CD4-positive, alpha-beta memory T cell (primary cell): ENCODE measurements at regions of chr17 and their contacts with region 1.

Region 1: DNA sequence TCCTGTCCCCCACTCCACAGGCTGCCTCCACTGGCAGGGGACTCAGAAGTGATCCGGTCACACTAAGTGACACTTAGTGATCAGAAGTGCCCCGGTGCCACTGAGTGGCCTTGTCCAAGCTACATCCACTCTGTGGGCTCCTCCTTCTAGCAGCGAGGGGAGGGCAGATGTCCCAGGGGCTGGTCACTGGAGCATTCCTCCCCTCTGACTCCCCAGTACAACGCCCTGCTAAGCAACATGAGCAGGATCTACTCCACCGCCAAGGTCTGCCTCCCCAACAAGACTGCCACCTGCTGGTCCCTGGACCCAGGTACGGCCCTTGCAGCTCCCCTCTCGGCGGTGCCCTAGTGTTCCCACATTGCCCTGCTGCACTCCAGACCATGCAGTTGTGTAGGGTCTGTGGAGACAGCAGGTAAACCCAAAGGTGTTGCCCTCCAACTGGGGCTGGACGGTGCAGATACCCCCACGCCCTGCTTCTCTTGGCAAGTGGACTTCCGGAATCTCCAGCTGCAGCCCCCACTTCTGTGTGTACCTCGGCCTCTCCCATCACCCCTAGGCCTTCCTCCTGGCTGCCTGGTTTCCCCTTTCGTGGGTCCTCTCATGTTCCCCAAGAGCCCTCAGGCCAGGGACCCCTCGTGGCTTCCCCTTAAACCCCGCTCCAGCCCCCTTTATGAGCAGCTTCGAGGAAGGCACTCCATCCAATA is 2.1 kb downstream of the ACE start:
- DNase-seq: peak; percentile 76 to 83 (median 77)
- H3K4me3 ChIP-seq: no peak overlapping the region
- H3K4me3 Mint-ChIP-seq: peak overlapping the region; percentile 49 to 86 (median 70)
- H3K27ac ChIP-seq: no peak overlapping the region
- H3K27ac Mint-ChIP-seq: peak overlapping the region in 5 of 7 donors; percentile 32 to 75 (median 57)
- H3K4me1 ChIP-seq: peaks cover 27% of the 10 kb centered on the region
- H3K4me1 Mint-ChIP-seq: peaks cover 8 to 34% (median 16%) of the 10 kb centered on the region in 4 donors
- H3K27me3 ChIP-seq: peaks cover 8% of the 10 kb centered on the region
- H3K27me3 Mint-ChIP-seq: no peaks in the 10 kb centered on the region

Region 2: GRCh38 chr17:63419949-63420867 is 58.7 kb before region 1 on chr17:
- CTCF ChIA-PET with region 1: interaction called, 339 read pairs
- POLR2A ChIA-PET with region 1: interaction called, 125 read pairs
- intact Hi-C with region 1: loop called (anchors 1 kb)
- DNase-seq: peak; percentile 32 to 55 (median 42)
- H3K4me3 ChIP-seq: no peak overlapping the region
- H3K4me3 Mint-ChIP-seq: peak overlapping the region; percentile 41 to 68 (median 61)
- H3K27ac ChIP-seq: no peak overlapping the region
- H3K27ac Mint-ChIP-seq: peak overlapping the region; percentile 47 to 93 (median 85)
- H3K4me1 ChIP-seq: peaks cover 17% of the 10 kb centered on the region
- H3K4me1 Mint-ChIP-seq: peaks cover 7 to 22% (median 14%) of the 10 kb centered on the region in 4 donors
- H3K27me3 ChIP-seq: no peaks in the 10 kb centered on the region
- H3K27me3 Mint-ChIP-seq: no peaks in the 10 kb centered on the region

Region 3: GRCh38 chr17:63425482-63425881 is 53.5 kb before region 1 on chr17:
- CTCF ChIA-PET with region 1: interaction called, 339 read pairs
- POLR2A ChIA-PET with region 1: interaction called, 125 read pairs
- intact Hi-C with region 1: loop called (anchors 1 kb)
- DNase-seq: peak; percentile 68 to 74 (median 72)
- H3K4me3 ChIP-seq: no peak overlapping the region
- H3K4me3 Mint-ChIP-seq: peak overlapping the region; percentile 32 to 82 (median 48)
- H3K27ac ChIP-seq: no peak overlapping the region
- H3K27ac Mint-ChIP-seq: peak overlapping the region in 5 of 7 donors; percentile 47 to 87 (median 67)
- H3K4me1 ChIP-seq: peaks cover 49% of the 10 kb centered on the region
- H3K4me1 Mint-ChIP-seq: peaks cover 26 to 54% (median 44%) of the 10 kb centered on the region in 4 donors
- H3K27me3 ChIP-seq: no peaks in the 10 kb centered on the region
- H3K27me3 Mint-ChIP-seq: no peaks in the 10 kb centered on the region

Region 4: GRCh38 chr17:63434876-63435684 is 43.9 kb before region 1 on chr17:
- CTCF ChIA-PET with region 1: interaction called, 339 read pairs
- POLR2A ChIA-PET with region 1: interaction called, 125 read pairs
- intact Hi-C with region 1: no loop called
- DNase-seq: peak; percentile 70 to 82 (median 76)
- H3K4me3 ChIP-seq: no peak overlapping the region
- H3K4me3 Mint-ChIP-seq: peak overlapping the region in 7 of 8 donors; percentile 48 to 79 (median 65)
- H3K27ac ChIP-seq: no peak overlapping the region
- H3K27ac Mint-ChIP-seq: peak overlapping the region; percentile 86 to 97 (median 92)
- H3K4me1 ChIP-seq: peaks cover 56% of the 10 kb centered on the region
- H3K4me1 Mint-ChIP-seq: peaks cover 15 to 70% (median 41%) of the 10 kb centered on the region in 4 donors
- H3K27me3 ChIP-seq: no peaks in the 10 kb centered on the region
- H3K27me3 Mint-ChIP-seq: no peaks in the 10 kb centered on the region

Region 5: DNA sequence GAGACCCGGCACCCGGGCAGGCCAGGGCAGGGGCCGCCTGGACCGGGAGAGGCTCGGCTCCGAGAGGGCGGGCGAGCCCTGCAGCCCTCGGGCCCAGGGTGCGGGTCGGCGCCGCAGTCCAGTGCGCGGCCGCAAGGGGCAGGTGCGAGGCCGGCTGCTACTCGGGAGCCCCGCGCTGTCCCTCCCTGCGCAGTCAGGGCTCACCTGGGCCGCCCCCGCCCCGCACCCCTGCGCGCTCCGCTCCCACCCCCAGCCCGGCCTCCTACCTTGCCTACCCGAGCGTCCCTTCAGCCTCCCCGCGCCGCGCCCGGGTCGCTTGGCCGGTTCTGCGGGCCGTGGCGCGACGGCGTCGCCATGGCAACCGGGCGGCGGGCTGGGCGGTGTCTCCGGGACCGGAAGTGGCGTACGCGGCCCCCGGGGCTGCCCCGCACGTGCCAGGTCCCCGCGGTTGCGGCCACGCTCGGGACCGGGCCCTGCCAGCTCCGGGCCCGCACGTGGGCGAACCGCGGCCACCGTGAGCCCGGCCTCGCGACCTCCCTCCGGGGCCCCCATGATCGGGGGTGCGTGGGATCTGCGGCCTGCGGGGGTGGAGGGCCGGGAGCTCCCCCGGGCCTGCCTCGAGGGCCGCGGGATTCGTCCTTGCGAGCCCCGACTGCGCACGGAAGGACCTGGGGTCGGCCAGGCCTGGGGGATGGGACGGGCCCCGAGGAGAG is 32.8 kb before region 1 on chr17 and contains the start of gene CYB561:
- CTCF ChIA-PET with region 1: interaction called, 107 read pairs
- POLR2A ChIA-PET with region 1: interaction called, 77 read pairs
- intact Hi-C with region 1: loop called (anchors 2 kb)
- DNase-seq: peak; percentile 74 to 81 (median 75)
- H3K4me3 ChIP-seq: peak within 1 kb of the TSS; percentile 67 to 73
- H3K4me3 Mint-ChIP-seq: peak within 1 kb of the TSS; percentile 80 to 89 (median 85)
- H3K27ac ChIP-seq: peak within 1 kb of the TSS; percentile 94
- H3K27ac Mint-ChIP-seq: peak within 1 kb of the TSS; percentile 91 to 98 (median 95)
- H3K4me1 ChIP-seq: peaks cover 48% of the 10 kb centered on the region
- H3K4me1 Mint-ChIP-seq: peaks cover 25 to 60% (median 43%) of the 10 kb centered on the region in 4 donors
- H3K27me3 ChIP-seq: no peaks in the 10 kb centered on the region
- H3K27me3 Mint-ChIP-seq: peaks cover 0 to 3% of the 10 kb centered on the region in 2 donors
- total RNA-seq, gene CYB561: 81.0 to 83.7 TPM

Region 6: DNA sequence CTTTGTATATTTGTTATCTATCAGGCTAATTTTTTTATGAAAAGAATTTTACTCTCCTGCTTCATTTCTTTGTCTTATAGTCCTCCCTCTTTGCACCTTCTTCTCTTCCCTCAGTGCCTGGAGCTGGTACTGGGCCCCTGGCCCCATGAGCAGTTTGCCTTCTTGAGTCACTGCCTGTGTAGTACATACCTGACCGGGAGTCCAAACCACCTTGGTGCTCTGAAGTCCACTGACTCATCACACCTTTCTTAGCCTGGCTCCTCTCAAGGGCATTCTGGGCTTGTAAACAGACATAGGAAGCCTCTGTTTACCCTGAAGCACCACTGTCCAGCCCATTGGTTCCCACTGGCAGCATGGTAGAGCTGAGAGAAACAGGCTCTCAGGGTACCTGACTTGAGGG is 110.7 kb after region 1 on chr17:
- CTCF ChIA-PET with region 1: no interaction called
- POLR2A ChIA-PET with region 1: no interaction called
- intact Hi-C with region 1: no loop called
- DNase-seq: no peak
- H3K4me3 ChIP-seq: no peak overlapping the region
- H3K4me3 Mint-ChIP-seq: no peak overlapping the region
- H3K27ac ChIP-seq: no peak overlapping the region
- H3K27ac Mint-ChIP-seq: peak overlapping the region in 2 of 7 donors; percentile 12 to 82
- H3K4me1 ChIP-seq: peaks cover 12% of the 10 kb centered on the region
- H3K4me1 Mint-ChIP-seq: peaks cover 12 to 19% (median 12%) of the 10 kb centered on the region in 4 donors
- H3K27me3 ChIP-seq: no peaks in the 10 kb centered on the region
- H3K27me3 Mint-ChIP-seq: no peaks in the 10 kb centered on the region

Region 7: GRCh38 chr17:63675607-63676413 is 196.9 kb after region 1 on chr17:
- CTCF ChIA-PET with region 1: no interaction called
- POLR2A ChIA-PET with region 1: no interaction called
- intact Hi-C with region 1: no loop called
- DNase-seq: no peak
- H3K4me3 ChIP-seq: no peak overlapping the region
- H3K4me3 Mint-ChIP-seq: no peak overlapping the region
- H3K27ac ChIP-seq: no peak overlapping the region
- H3K27ac Mint-ChIP-seq: peak overlapping the region in 6 of 7 donors; percentile 17 to 84 (median 60)
- H3K4me1 ChIP-seq: peaks cover 10% of the 10 kb centered on the region
- H3K4me1 Mint-ChIP-seq: peaks cover 10 to 24% (median 16%) of the 10 kb centered on the region in 4 donors
- H3K27me3 ChIP-seq: no peaks in the 10 kb centered on the region
- H3K27me3 Mint-ChIP-seq: no peaks in the 10 kb centered on the region